ENCODE measurements at regions of chr1 and their contacts with region 1.

Region 1: DNA sequence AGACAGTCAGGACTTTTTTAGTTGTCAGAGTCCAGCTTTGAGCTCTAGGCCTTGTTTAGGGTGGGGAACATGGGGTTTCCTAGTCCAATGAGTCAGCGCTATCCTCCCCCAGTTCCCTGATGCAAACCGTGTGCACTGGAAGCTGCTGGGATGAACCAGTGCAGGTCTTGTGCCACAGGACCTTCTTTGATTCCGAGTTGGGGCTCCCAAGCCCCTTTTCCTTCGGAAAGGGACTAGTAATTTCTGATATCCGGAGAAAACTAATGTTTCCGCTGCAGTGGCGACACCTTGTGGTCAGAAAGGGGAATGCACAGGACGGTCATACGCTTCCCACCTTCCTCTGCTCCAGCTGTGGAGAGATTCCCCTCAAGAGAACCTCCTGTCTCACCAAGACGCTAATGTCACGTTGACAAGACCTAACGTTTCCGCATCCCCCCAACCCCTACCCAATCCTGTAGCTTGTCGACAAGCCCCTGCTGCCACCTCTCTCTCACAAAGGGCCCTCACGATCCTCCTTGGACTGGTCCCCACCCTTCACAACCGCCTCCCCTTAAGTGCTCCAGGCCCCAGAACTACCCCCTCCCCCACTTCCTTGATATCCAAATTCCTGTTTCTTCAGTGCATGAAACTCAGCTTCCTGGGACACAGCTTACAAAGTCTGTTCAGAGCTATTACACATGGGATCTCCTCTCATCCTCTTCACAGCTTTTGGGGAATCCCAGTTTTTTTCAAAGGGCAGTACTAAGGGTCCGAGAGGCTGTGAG is 30.9 kb downstream of the GPA33 start:
- DNase-seq: peak; percentile 84
- H3K4me3 Mint-ChIP-seq: no peak overlapping the region
- H3K27ac Mint-ChIP-seq: no peak overlapping the region
- H3K4me1 Mint-ChIP-seq: peaks cover 6% of the 10 kb centered on the region
- H3K27me3 Mint-ChIP-seq: no peaks in the 10 kb centered on the region

Region 2: DNA sequence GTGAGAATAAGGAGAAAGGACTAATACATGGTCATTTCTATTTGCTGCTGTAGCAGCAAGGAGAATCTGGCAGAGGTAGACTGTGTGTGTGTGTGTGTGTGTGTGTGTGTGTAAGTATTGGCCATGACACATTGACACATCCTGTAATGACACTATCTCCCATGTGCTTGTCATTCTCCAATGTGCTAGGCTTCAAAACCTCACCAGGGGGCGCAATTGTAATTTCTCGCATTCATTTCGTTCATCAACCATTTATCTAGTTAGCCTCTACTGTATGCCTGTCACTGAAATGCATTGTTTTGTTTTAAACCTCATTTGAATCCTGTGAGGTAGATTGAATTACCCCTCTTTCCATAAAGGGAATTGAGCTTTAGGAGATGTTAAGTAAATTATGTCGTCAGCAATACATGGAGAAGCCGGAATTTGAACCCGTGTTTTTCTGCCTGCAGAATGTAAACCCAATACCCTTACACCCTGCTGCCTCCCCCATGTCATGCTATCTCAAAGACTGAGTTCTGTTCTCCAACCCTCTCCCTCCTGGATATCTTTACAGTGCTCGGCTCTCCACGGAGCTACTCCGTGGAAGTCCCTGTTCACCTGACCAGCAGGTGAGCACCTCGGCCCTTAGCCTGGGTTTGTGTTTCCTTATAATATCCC is 1131.0 kb before region 1 on chr1:
- CTCF ChIA-PET with region 1: no interaction called
- POLR2A ChIA-PET with region 1: no interaction called
- intact Hi-C with region 1: loop called (anchors 5 kb)
- DNase-seq: peak; percentile 68
- H3K4me3 Mint-ChIP-seq: no peak overlapping the region
- H3K27ac Mint-ChIP-seq: no peak overlapping the region
- H3K4me1 Mint-ChIP-seq: no peaks in the 10 kb centered on the region
- H3K27me3 Mint-ChIP-seq: peaks cover 12% of the 10 kb centered on the region

Region 3: DNA sequence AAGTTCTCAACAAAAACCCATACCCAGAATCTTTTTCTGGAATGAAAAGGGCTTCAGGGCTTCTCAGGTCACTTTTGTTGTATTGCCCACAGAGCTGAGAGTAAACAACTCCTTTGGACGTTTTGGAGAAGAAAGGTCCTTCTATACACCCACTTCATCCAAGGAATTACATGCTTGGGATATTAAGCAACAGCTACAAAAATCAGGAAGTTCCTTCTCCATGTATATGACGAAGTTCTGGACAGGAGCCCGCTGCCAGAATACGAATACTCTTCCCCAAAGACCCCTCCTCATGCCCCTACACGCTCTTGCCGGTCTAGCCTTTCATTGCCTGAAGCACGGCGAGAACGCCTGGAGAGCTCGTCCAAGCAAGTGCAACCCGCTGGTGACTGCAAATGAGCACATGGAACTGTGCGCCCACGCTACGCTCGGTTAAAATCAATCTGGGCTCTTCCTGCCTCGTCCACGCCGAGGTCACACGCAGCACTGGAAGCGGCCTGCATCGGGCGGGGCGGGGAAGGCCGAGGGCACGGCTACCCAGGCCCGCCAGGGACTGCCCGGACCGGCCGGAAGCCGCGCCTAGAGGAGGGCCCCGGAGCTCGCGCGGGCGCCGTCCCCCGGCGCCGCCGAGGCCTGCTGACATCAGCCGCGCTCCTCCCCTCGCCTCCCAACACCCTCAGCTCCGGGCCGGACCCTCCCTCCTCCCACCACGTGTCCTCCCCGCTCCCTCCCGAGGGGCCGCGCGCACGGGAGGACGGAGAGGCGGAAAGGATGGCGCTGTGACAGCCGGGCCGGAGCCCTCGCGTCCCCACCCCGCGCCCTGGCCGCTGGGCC is 220.2 kb before region 1 on chr1 and contains the start of gene POGK:
- CTCF ChIA-PET with region 1: interaction called, 4 read pairs
- POLR2A ChIA-PET with region 1: no interaction called
- intact Hi-C with region 1: loop called (anchors 5 kb)
- DNase-seq: peak; percentile 92
- H3K4me3 Mint-ChIP-seq: peak within 1 kb of the TSS; percentile 88
- H3K27ac Mint-ChIP-seq: peak within 1 kb of the TSS; percentile 95
- H3K4me1 Mint-ChIP-seq: peaks cover 41% of the 10 kb centered on the region
- H3K27me3 Mint-ChIP-seq: no peaks in the 10 kb centered on the region
- total RNA-seq, gene POGK: 43.0 to 43.1 TPM

Region 4: GRCh38 chr1:166910396-166910994 is 148.7 kb before region 1 on chr1:
- CTCF ChIA-PET with region 1: interaction called, 918 read pairs
- POLR2A ChIA-PET with region 1: interaction called, 8 read pairs
- intact Hi-C with region 1: loop called (anchors 1 kb)
- DNase-seq: peak; percentile 86
- H3K4me3 Mint-ChIP-seq: no peak overlapping the region
- H3K27ac Mint-ChIP-seq: no peak overlapping the region
- H3K4me1 Mint-ChIP-seq: peaks cover 12% of the 10 kb centered on the region
- H3K27me3 Mint-ChIP-seq: no peaks in the 10 kb centered on the region

Region 5: GRCh38 chr1:167043752-167044488 is 15.3 kb before region 1 on chr1:
- CTCF ChIA-PET with region 1: interaction called, 32 read pairs
- POLR2A ChIA-PET with region 1: no interaction called
- intact Hi-C with region 1: no loop called
- DNase-seq: peak; percentile 88
- H3K4me3 Mint-ChIP-seq: peak overlapping the region; percentile 72
- H3K27ac Mint-ChIP-seq: peak overlapping the region; percentile 70
- H3K4me1 Mint-ChIP-seq: peaks cover 15% of the 10 kb centered on the region
- H3K27me3 Mint-ChIP-seq: peaks cover 8% of the 10 kb centered on the region

Region 6: DNA sequence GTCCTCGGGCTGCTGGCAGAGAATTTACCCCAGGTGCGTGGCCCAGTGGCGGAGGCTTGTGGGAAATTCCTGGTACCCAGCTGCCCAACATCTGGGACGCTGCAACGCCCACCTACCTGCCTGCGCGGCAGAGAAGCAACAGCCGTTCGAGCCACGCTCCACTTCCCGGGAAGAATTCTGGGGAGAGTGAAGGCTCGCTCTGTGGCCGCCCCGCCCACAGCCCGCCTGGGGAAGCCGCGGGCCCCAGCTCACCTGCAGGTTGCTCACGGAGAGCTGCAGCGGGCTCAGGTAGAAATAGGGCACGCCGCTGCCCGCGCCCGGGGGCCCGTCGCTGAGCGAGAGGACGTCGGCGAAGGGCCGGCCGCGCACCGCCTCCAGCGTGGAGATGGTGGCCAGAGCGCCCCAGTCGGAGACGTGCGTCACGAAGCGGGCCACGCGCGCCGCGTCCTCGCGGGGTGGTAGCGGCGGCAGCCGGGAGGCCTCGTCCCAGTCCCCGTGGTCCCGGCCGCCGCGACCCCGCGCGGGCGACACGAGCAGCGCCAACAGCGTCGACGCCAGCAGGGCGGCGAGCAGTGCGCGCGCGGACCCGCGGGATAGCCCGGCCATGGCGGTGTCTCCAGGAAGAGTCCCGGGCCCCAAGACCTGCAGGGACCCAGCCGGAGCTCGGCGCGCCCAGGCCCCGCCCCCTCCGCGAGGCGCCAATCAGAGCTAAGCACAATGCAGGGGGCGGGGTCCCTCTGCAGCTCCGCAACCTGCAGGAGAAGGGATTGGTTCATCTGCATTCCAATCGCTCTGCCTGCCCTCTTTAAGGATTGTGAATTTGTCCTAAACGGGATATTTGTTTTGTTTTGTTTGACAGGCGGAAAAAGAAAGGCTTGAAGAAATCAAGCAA is 494.2 kb after region 1 on chr1 and contains the start of gene CREG1:
- CTCF ChIA-PET with region 1: interaction called, 16 read pairs
- POLR2A ChIA-PET with region 1: no interaction called
- intact Hi-C with region 1: no loop called
- DNase-seq: peak; percentile 94
- H3K4me3 Mint-ChIP-seq: peak within 1 kb of the TSS; percentile 84
- H3K27ac Mint-ChIP-seq: no peak within 1 kb of the TSS
- H3K4me1 Mint-ChIP-seq: peaks cover 35% of the 10 kb centered on the region
- H3K27me3 Mint-ChIP-seq: no peaks in the 10 kb centered on the region
- total RNA-seq, gene CREG1: 13.5 to 14.6 TPM

Measured in activated CD4-positive, alpha-beta memory T cell treated with anti-CD3 and anti-CD28 coated beads for 36 hours (primary cell).